ENCODE measurements at regions of chr14 and their contacts with region 1.

Region 1: DNA sequence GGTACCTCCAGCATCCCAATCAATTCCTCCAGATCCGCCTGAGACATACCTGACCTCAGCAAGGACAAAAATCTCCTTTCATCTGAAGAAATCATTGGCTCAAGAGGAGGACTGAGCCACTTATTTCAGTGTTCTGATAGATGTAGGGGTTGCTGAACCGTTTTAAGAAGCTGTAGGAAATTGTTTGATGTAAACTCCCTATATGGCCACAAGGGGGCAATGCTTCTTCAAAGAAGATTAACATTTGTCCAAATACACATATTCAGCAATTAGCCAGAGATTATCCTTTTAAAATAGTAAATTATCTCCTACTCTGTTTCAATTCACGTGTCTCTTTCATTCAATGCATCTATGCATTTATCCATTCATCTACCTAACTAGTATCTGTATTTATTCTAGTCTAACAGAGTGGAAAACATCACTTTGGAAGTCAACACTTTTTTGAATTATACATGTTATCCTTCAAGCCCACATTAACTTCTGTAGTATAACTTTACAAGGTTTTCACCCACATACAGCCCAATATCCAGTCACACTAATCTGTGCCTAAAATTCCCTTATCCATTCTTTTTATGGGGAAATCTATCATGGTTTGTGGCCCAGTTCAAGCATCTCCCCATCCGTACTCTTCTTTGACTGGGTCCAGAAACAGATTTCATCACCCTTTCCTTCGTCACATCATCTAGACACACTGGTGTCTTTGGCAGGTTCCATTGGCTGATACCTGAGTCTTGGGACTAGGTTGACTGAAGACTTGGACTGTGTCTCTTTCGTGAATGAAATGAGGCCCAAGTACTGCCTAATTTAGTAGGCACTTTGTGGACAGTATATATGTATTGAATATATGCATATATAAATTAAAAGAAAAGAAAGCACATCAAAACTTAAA is 411.0 kb upstream of the OR4E1 start:
- DNase-seq: peak; percentile 77
- H3K4me3 Mint-ChIP-seq: peak overlapping the region; percentile 73
- H3K27ac Mint-ChIP-seq: peak overlapping the region; percentile 74
- H3K4me1 Mint-ChIP-seq: peaks cover 17% of the 10 kb centered on the region
- H3K27me3 Mint-ChIP-seq: no peaks in the 10 kb centered on the region

Region 2: GRCh38 chr14:22099942-22100763 is 15.5 kb after region 1 on chr14:
- intact Hi-C with region 1: loop called (anchors 1 kb)
- DNase-seq: peak; percentile 87
- H3K4me3 Mint-ChIP-seq: no peak overlapping the region
- H3K27ac Mint-ChIP-seq: peak overlapping the region; percentile 56
- H3K4me1 Mint-ChIP-seq: peaks cover 38% of the 10 kb centered on the region
- H3K27me3 Mint-ChIP-seq: no peaks in the 10 kb centered on the region